ENCODE measurements at regions of chr3 and their contacts with region 1.

Region 1: GRCh38 chr3:52798978-52799476 is 4.4 kb downstream of the ITIH3 start:
- DNase-seq: peak; percentile 69
- H3K4me3 ChIP-seq: no peak overlapping the region
- H3K27ac ChIP-seq: no peak overlapping the region
- H3K4me1 ChIP-seq: peaks cover 7% of the 10 kb centered on the region
- H3K27me3 ChIP-seq: no peaks in the 10 kb centered on the region
- CTCF ChIP-seq: peak; percentile 62 to 69

Region 2: GRCh38 chr3:52291508-52292181 is 507.4 kb before region 1 on chr3:
- CTCF ChIA-PET with region 1: no interaction called
- dilution Hi-C with region 1: no loop called
- in situ Hi-C with region 1: no loop called
- intact Hi-C with region 1: no loop called
- DNase-seq: no peak
- H3K4me3 ChIP-seq: no peak overlapping the region
- H3K27ac ChIP-seq: no peak overlapping the region
- H3K4me1 ChIP-seq: peaks cover 4% of the 10 kb centered on the region
- H3K27me3 ChIP-seq: no peaks in the 10 kb centered on the region
- CTCF ChIP-seq: peak in 1 of 2 donors; percentile 54

Region 3: GRCh38 chr3:52770496-52771333 is 28.3 kb before region 1 on chr3 and contains the start of gene NEK4:
- CTCF ChIA-PET with region 1: no interaction called
- dilution Hi-C with region 1: no loop called
- in situ Hi-C with region 1: no loop called
- intact Hi-C with region 1: loop called (anchors 1 kb)
- DNase-seq: peak; percentile 87
- H3K4me3 ChIP-seq: peak within 1 kb of the TSS; percentile 76 to 82 (median 79)
- H3K27ac ChIP-seq: peak within 1 kb of the TSS; percentile 64
- H3K4me1 ChIP-seq: peaks cover 15% of the 10 kb centered on the region
- H3K27me3 ChIP-seq: no peaks in the 10 kb centered on the region
- CTCF ChIP-seq: no peak
- total RNA-seq, gene NEK4: 23.0 to 23.7 TPM